ENCODE measurements at regions of chr1 and their contacts with region 1.

Region 1: GRCh38 chr1:169601093-169601881 is 15.0 kb upstream of the F5 start:
- DNase-seq: no peak
- H3K4me3 ChIP-seq: no peak overlapping the region
- H3K27ac ChIP-seq: no peak overlapping the region
- H3K4me1 ChIP-seq: no peaks in the 10 kb centered on the region
- H3K27me3 ChIP-seq: no peaks in the 10 kb centered on the region
- CTCF ChIP-seq: peak; percentile 28

Region 2: GRCh38 chr1:169427081-169427641 is 174.1 kb before region 1 on chr1 and contains the start of gene CCDC181:
- intact Hi-C with region 1: no loop called
- DNase-seq: no peak
- H3K4me3 ChIP-seq: no peak within 1 kb of the TSS
- H3K27ac ChIP-seq: no peak within 1 kb of the TSS
- H3K4me1 ChIP-seq: no peaks in the 10 kb centered on the region
- H3K27me3 ChIP-seq: peaks cover 14% of the 10 kb centered on the region
- CTCF ChIP-seq: no peak
- total RNA-seq, gene CCDC181: not detected

Region 3: GRCh38 chr1:169711469-169712281 is 110.4 kb after region 1 on chr1 and contains the start of gene SELL:
- intact Hi-C with region 1: loop called (anchors 5 kb)
- DNase-seq: peak; percentile 81
- H3K4me3 ChIP-seq: peak within 1 kb of the TSS; percentile 20
- H3K27ac ChIP-seq: no peak within 1 kb of the TSS
- H3K4me1 ChIP-seq: no peaks in the 10 kb centered on the region
- H3K27me3 ChIP-seq: no peaks in the 10 kb centered on the region
- CTCF ChIP-seq: peak; percentile 65
- total RNA-seq, gene SELL: 1.5 to 2.2 TPM

Region 4: DNA sequence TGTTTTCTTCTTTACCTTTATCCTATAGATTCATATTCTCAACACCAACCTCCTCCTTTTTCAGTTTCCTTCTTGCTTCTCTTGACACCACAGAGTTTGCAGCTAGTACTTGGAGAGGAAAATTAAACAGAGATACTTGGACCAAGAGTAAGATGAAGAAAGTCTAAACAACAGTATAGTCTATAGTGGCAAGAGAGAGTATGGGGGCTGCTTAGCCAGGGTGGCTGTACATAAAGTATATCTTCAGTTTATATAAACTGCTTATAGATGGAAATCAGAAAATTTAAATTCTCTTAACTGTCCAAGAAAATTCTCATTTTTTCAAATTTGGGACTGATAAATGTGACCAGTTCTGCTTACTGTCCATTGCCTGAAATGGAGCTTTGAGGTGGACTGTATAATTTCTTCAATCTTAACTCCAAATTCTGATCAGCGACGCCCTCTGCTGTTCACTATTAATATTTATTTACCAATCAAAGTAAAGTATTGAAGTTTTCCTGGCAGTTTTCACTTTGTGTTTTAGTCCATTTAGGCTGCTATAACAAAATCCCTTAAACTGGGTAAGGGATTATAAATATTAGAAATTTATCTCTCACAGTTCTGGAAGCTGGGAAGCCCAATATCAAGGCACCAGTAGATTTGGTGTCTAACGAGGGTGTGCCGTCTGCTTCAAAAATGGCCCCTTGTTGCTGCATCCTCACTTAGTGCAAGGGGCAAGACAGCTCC is 208.2 kb after region 1 on chr1:
- intact Hi-C with region 1: loop called (anchors 5 kb)
- DNase-seq: no peak
- H3K4me3 ChIP-seq: no peak overlapping the region
- H3K27ac ChIP-seq: no peak overlapping the region
- H3K4me1 ChIP-seq: no peaks in the 10 kb centered on the region
- H3K27me3 ChIP-seq: no peaks in the 10 kb centered on the region
- CTCF ChIP-seq: peak; percentile 37